HepG2 (cell line): ENCODE measurements at regions of chr17 and their contacts with region 1.

Region 1: GRCh38 chr17:5762191-5762590 is 177.9 kb upstream of the NLRP1 start:
- DNase-seq: no peak
- ATAC-seq: no peak
- H3K4me3 ChIP-seq: no peak overlapping the region
- H3K27ac ChIP-seq: no peak overlapping the region
- H3K4me1 ChIP-seq: peaks cover 43% of the 10 kb centered on the region
- H3K27me3 ChIP-seq: no peaks in the 10 kb centered on the region; a peak in 1 of 5 replicates
- CTCF ChIP-seq: no peak
- EP300 ChIP-seq: no peak
- POLR2A ChIP-seq: no peak
- RAD21 ChIP-seq: no peak

Region 2: DNA sequence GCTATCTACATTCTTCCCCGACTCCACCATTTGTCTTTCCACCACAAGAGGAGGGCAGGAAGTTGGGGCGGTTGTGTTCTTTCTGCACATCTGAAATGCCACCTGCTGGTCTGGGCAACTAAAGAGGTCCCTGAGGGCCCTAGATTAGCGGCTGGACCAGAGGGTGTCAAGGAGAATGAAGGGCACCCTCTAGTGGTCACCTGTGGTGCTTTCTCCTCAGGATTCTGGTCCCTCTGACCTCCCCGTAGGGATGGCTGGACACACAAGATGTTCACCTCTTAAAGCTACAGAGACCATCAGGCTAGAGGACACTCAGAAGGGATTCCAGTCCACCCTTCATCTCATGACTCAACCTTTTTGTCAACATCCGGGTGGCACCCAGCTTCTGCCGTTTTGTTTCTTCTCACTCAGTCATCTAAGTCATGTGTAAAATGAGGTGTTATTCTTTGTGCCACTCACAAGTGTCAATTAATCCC is 524.6 kb before region 1 on chr17:
- CTCF ChIA-PET with region 1: no interaction called
- POLR2A ChIA-PET with region 1: no interaction called
- in situ Hi-C with region 1: no loop called
- intact Hi-C with region 1: no loop called
- DNase-seq: peak; percentile 81
- ATAC-seq: peak; percentile 94
- H3K4me3 ChIP-seq: no peak overlapping the region
- H3K27ac ChIP-seq: no peak overlapping the region
- H3K4me1 ChIP-seq: peaks cover 17% of the 10 kb centered on the region
- H3K27me3 ChIP-seq: peaks cover 5 to 26% of the 10 kb centered on the region in 2 experiments; a peak in 4 of 5 replicates
- CTCF ChIP-seq: peak; percentile 93
- EP300 ChIP-seq: no peak
- POLR2A ChIP-seq: no peak
- RAD21 ChIP-seq: peak; percentile 86

Region 3: GRCh38 chr17:5651348-5651747 is 110.8 kb before region 1 on chr17:
- CTCF ChIA-PET with region 1: no interaction called
- POLR2A ChIA-PET with region 1: no interaction called
- in situ Hi-C with region 1: no loop called
- intact Hi-C with region 1: no loop called
- DNase-seq: no peak
- ATAC-seq: no peak
- H3K4me3 ChIP-seq: no peak overlapping the region
- H3K27ac ChIP-seq: no peak overlapping the region
- H3K4me1 ChIP-seq: no peaks in the 10 kb centered on the region
- H3K27me3 ChIP-seq: no peaks in the 10 kb centered on the region; a peak in 1 of 5 replicates
- CTCF ChIP-seq: no peak
- EP300 ChIP-seq: no peak
- POLR2A ChIP-seq: no peak
- RAD21 ChIP-seq: no peak

Region 4: DNA sequence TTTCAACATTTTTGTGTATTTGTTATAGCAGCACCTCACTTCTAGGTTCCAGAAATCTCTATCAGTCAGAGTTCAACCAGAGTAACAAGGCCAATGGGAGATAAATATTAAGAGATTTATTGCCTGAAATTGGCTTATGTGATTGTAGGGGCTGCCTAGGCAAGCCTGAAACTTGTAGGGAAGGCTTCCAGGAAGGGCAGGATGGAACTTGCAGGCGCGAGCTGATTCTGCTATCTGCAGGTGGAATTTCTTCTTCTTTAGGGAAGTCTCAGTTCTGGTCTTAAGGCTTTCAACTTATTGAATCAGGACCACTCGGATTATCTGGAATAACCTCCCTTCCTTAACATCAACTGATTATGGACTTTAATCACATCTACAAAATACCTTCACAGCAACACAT is 21.7 kb after region 1 on chr17:
- CTCF ChIA-PET with region 1: no interaction called
- POLR2A ChIA-PET with region 1: no interaction called
- in situ Hi-C with region 1: no loop called
- intact Hi-C with region 1: loop called (anchors 2 kb)
- DNase-seq: no peak
- ATAC-seq: no peak
- H3K4me3 ChIP-seq: no peak overlapping the region
- H3K27ac ChIP-seq: no peak overlapping the region
- H3K4me1 ChIP-seq: peaks cover 71% of the 10 kb centered on the region
- H3K27me3 ChIP-seq: no peaks in the 10 kb centered on the region
- CTCF ChIP-seq: no peak
- EP300 ChIP-seq: no peak
- POLR2A ChIP-seq: no peak
- RAD21 ChIP-seq: no peak